Activated T-helper 1 cell treated with anti-CD3 and anti-CD28 coated beads, Interleukin-12 subunit alpha, Interleukin-12 subunit beta, Interleukin-2, Interleukin-4 antibody, amounts not matched to agents 30 ng/mL and 10 ng/mL and 1 ng/mL, durations not matched to agents 14 hours and 24 hours and 36 hours (primary cell): ENCODE measurements at regions of chr18 and their contacts with region 1.

Region 1: DNA sequence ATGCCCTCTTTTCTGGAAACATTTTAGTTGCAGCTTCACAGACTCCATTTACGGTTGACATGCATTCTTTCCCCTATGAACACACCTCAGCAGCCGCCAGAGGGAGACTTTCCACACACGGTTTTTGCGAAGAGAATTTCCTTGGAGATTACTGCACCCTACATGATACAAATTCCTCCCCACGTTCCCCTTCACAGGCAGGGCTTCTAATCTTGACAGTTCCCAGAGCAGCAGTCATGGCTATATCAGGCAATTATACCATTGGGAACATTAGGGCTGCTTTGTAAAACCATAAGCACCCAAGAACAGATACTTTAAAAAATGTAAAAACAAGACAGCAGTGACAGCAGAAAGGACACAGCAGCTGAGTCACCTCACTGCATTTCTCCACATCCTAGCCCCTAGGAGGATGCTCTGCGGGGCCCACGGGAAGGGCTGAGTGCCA is 253.8 kb downstream of the TGIF1 start:
- DNase-seq: no peak
- H3K4me3 Mint-ChIP-seq: no peak overlapping the region
- H3K27ac Mint-ChIP-seq: no peak overlapping the region
- H3K4me1 Mint-ChIP-seq: peaks cover 4% of the 10 kb centered on the region
- H3K27me3 Mint-ChIP-seq: peaks cover 25% of the 10 kb centered on the region

Region 2: GRCh38 chr18:3790703-3791102 is 86.9 kb after region 1 on chr18:
- intact Hi-C with region 1: no loop called
- DNase-seq: no peak
- H3K4me3 Mint-ChIP-seq: no peak overlapping the region
- H3K27ac Mint-ChIP-seq: no peak overlapping the region
- H3K4me1 Mint-ChIP-seq: no peaks in the 10 kb centered on the region
- H3K27me3 Mint-ChIP-seq: peaks cover 12% of the 10 kb centered on the region

Region 3: DNA sequence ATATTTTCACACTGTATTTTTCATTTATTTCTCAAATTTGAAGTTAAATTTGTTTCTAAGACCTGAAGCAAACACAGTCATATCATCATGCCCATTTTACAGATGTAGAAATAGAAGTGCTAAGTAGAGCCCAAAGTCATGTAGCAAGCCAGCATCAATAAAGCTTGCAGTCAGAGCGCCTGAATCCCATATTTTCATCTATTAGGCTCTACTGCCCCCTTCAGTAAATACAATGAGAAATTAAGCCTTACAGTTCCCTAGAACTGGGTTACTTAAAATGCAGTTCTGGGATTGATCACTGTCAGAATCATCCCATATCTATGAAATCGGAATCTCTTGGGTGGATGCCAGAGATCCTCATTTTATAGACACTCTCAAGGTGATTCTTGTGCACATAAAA is 166.1 kb after region 1 on chr18:
- intact Hi-C with region 1: loop called (anchors 10 kb)
- DNase-seq: no peak
- H3K4me3 Mint-ChIP-seq: no peak overlapping the region
- H3K27ac Mint-ChIP-seq: no peak overlapping the region
- H3K4me1 Mint-ChIP-seq: no peaks in the 10 kb centered on the region
- H3K27me3 Mint-ChIP-seq: peaks cover 25% of the 10 kb centered on the region

Region 4: DNA sequence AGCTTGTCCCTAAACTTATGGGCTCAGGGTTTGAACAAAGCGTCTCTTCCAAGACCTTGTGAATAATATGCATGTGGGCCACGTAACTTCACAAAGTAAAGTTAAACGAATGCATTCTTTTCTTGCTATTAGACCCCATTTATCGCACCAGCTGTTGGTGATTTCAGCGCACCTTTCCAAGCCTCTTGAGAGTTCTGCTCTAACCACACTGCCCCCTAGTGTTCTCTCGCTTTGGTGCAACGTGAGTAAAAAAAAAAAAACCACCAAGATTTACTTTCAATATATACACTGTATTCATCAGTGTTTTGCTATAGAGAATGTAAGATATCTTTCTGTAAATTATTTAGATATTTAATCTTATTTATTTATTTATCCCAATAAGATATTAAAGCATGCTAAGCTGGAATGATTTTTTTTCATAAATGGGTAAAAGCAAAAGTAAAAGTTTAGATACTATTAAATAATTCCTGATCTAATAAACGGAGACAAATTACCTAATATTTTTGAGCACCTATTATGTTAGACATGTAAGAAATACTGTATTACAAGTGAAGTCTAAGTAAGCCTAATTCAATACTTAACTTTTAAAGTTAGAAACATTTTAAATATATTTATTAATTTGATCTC is 291.8 kb after region 1 on chr18:
- intact Hi-C with region 1: loop called (anchors 1 kb)
- DNase-seq: peak; percentile 52
- H3K4me3 Mint-ChIP-seq: no peak overlapping the region
- H3K27ac Mint-ChIP-seq: no peak overlapping the region
- H3K4me1 Mint-ChIP-seq: no peaks in the 10 kb centered on the region
- H3K27me3 Mint-ChIP-seq: peaks cover 9% of the 10 kb centered on the region